HCT116 (cell line): ENCODE measurements at regions of chr7 and their contacts with region 1.

Region 1: DNA sequence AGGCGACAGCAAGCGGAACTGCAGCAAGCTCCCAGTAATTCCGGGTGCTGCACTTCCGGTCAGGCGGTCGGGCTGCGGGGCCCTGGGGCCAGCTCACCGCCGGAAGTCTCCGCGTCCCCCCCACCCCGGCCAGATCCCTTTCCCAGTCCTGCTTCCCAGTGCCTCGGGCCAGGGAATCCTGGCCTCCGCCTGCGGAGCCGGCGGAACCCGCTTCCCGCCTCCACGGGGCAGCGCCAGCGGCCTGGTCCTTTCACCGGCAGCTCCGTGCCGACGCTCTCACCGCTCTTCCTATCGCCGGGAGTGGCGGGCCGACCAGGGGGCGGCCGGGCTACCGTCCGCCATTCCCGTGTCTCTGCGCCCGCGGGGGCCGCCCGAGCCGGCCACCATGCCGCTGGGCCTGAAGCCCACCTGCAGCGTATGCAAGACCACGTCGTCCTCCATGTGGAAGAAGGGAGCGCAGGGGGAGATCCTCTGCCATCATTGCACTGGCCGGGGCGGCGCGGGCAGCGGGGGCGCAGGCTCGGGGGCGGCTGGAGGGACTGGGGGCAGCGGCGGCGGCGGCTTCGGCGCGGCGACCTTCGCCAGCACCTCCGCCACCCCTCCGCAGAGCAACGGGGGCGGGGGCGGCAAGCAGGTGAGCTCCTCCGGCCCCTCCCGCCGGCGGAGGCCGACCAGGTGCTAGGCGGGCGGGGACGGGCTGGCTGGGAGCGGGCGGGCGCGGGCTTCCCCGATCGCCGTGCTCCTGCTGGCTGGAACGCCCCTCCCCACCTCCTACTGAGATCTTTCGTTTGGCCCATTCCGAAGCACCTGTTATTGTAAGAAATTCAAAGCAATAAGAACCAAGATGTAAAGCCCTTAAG is at the start of gene GATAD1:
- DNase-seq: peak; percentile 88
- ATAC-seq: peak; percentile 89
- H3K4me3 ChIP-seq: peak within 1 kb of the TSS; percentile 72 to 87
- H3K27ac ChIP-seq: peak within 1 kb of the TSS; percentile 87
- H3K4me1 ChIP-seq: peaks cover 4 to 10% of the 10 kb centered on the region in 2 experiments; a peak in 3 of 4 replicates
- H3K27me3 ChIP-seq: no peaks in the 10 kb centered on the region
- CTCF ChIP-seq: peak in 1 of 3 experiments; percentile 89; a peak in 1 of 6 replicates
- POLR2A ChIP-seq: peak; percentile 43
- RAD21 ChIP-seq: no peak
- total RNA-seq, gene GATAD1: 23.9 TPM

Region 2: GRCh38 chr7:91835846-91836368 is 611.7 kb before region 1 on chr7:
- CTCF ChIA-PET with region 1: interaction called, 13 read pairs
- POLR2A ChIA-PET with region 1: no interaction called
- RAD21 ChIA-PET with region 1: no interaction called
- intact Hi-C with region 1: loop called (anchors 2 kb)
- DNase-seq: no peak
- ATAC-seq: peak; percentile 36; the same call in 1 of the 2 replicates
- H3K4me3 ChIP-seq: no peak overlapping the region
- H3K27ac ChIP-seq: no peak overlapping the region
- H3K4me1 ChIP-seq: peaks cover 0 to 10% of the 10 kb centered on the region in 2 experiments; a peak in 1 of 4 replicates
- H3K27me3 ChIP-seq: no peaks in the 10 kb centered on the region
- CTCF ChIP-seq: no peak
- POLR2A ChIP-seq: no peak
- RAD21 ChIP-seq: no peak

Region 3: DNA sequence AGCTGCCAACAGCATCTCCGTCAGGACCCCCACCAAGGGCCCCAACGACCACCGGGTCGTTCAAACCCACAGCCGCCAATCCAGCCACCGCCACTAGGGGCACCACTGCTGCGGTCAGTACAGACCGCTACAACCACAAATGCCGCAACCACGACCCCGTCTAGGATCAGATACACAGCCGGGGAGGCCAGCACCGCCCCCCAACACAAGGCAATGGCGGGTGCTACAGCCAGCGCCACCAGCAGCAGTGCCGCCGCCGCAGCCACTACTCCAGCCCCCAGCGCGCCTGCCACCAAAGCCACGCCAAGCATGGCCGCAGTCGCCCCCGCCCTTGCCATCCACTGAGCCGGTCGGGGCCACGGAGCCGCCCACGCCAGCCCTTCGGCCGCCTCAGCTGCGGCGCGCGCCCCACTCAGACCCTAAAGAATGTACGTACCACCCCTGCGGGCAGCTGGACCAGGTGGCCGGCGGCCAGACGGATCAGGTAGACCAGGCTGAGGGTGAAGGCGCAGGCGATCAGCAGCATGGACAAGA is 313.8 kb before region 1 on chr7:
- CTCF ChIA-PET with region 1: interaction called, 8 read pairs
- POLR2A ChIA-PET with region 1: interaction called, 3 read pairs
- RAD21 ChIA-PET with region 1: no interaction called
- intact Hi-C with region 1: loop called (anchors 1 kb)
- DNase-seq: peak; percentile 33
- ATAC-seq: peak; percentile 59
- H3K4me3 ChIP-seq: peak overlapping the region; percentile 84 to 97
- H3K27ac ChIP-seq: peak overlapping the region; percentile 94
- H3K4me1 ChIP-seq: peaks cover 5 to 24% of the 10 kb centered on the region in 2 experiments; a peak in 2 of 4 replicates
- H3K27me3 ChIP-seq: no peaks in the 10 kb centered on the region
- CTCF ChIP-seq: peak; percentile 33 to 93 (median 91); a peak in 5 of 6 replicates
- POLR2A ChIP-seq: no peak
- RAD21 ChIP-seq: peak; percentile 49; the same call in 1 of the 2 replicates

Region 4: DNA sequence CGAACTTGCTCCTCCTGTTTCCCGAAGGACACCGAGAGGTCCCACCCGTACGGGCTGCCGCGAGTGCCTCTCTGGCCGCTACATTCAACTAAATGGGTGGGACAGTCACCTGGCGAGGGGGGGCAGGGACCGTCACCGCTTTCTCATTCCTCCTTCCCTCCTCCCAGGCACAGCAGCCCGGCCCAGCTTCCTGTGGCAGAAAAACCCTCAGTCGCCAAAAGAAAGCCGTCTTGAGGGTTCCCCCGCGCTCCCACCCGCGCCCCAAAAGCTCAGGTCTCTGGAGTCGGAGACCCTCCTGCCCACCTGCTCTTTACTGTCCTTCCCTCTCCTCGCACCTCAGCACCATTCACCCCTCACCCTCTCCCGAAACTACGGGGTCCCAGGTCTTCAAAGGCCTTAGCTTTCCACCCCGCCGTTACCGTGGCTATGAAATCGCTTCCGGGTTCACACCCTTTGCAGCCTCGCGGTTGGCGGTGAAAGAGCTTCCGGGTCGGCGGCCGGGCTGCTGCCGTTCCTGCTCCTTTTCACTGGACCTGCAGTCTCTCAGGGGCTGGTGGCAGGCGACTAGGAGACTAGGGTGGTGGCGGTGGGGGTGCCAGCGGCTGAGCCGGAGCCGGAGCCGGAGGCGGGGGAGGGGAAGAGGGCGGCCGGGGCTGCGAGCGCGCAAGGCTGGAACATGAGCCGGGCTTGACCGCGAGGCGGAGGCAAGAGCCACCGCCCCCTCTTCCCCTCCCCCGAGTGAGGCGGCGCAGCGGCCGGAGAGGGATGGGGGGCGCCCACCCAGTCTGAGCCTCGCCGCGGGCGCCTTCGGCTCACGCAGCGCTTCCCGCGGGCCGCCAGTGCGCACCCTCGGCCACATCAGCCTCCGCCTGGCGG is 201.8 kb before region 1 on chr7 and contains the starts of genes ANKIB1 and KRIT1:
- CTCF ChIA-PET with region 1: interaction called, 4 read pairs
- POLR2A ChIA-PET with region 1: no interaction called
- RAD21 ChIA-PET with region 1: no interaction called
- intact Hi-C with region 1: loop called (anchors 1 kb)
- DNase-seq: peak; percentile 81
- ATAC-seq: peak; percentile 84
- H3K4me3 ChIP-seq: peak within 1 kb of the TSS; percentile 82 to 92
- H3K27ac ChIP-seq: peak within 1 kb of the TSS; percentile 79
- H3K4me1 ChIP-seq: peaks cover 11 to 24% of the 10 kb centered on the region in 2 experiments; a peak in 3 of 4 replicates
- H3K27me3 ChIP-seq: no peaks in the 10 kb centered on the region
- CTCF ChIP-seq: 0 out of 6 replicates have a peak, but pooled peaks of 1 of the 3 experiments have one; percentile 4
- POLR2A ChIP-seq: peak; percentile 66
- RAD21 ChIP-seq: no peak
- total RNA-seq, gene ANKIB1: 41.2 TPM
- total RNA-seq, gene KRIT1: 32.4 TPM

Region 5: DNA sequence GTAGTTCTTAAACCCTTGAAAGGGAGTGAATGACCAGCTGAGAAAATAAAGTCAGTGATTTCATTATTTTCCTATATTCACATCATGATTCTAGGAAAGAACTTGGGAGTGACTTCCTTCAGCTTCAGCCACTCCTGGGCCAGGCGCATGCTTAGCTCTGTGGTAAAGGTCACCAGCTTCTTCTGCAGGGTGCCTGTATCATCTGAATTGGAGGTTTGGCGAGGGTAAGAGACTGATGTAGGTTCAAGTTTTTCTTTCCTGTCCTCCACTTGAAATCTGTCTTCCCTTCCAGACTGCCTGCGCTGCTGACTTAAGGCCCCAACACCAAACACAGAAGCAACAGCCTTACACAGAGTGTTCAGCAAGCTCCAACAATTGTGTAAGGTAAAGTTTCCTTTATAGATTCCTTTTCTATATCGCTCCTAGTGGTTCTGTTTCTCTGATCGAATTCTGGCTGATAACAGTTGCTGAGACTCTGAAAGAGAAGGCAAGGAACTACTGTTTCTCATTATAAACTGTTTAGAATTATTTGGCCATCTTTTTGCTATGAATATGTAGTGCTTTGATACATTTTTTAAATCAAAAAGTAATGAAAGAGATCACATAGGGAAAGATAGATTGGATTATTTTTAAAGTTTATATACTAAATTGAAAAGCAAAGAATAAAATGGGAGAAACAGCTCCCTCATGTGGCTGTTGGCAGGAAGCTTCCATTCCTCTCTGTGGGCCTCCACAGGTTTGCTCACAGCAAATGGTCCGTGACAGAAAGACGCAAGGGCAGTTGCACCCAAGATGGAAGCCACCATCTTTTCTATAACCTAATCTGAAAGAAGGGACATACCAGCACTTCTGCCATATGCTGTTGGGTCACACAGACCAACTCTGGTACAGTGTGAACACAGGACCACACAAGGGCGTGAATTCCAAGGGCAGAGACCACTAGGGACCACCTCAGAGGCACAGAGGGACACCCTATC is 13.7 kb after region 1 on chr7:
- CTCF ChIA-PET with region 1: interaction called, 24 read pairs
- POLR2A ChIA-PET with region 1: no interaction called
- RAD21 ChIA-PET with region 1: no interaction called
- intact Hi-C with region 1: no loop called
- DNase-seq: peak; percentile 41
- ATAC-seq: peak; percentile 94
- H3K4me3 ChIP-seq: no peak overlapping the region
- H3K27ac ChIP-seq: no peak overlapping the region
- H3K4me1 ChIP-seq: no peaks in the 10 kb centered on the region
- H3K27me3 ChIP-seq: no peaks in the 10 kb centered on the region
- CTCF ChIP-seq: peak; percentile 71 to 84 (median 78); a peak in 5 of 6 replicates
- POLR2A ChIP-seq: no peak
- RAD21 ChIP-seq: peak; percentile 69